Motor neuron (in vitro differentiated cells): ENCODE measurements at regions of chr5 and their contacts with region 1.

Region 1: GRCh38 chr5:79829260-79829659 is 139.6 kb downstream of the CMYA5 start:
- ATAC-seq: peak in 3 of 8 experiments; percentile 10 to 84 (median 37)
- H3K4me3 ChIP-seq: no peak overlapping the region
- H3K27ac ChIP-seq: no peak overlapping the region
- H3K4me1 ChIP-seq: peaks cover 20 to 27% of the 10 kb centered on the region in 2 donors

Region 2: DNA sequence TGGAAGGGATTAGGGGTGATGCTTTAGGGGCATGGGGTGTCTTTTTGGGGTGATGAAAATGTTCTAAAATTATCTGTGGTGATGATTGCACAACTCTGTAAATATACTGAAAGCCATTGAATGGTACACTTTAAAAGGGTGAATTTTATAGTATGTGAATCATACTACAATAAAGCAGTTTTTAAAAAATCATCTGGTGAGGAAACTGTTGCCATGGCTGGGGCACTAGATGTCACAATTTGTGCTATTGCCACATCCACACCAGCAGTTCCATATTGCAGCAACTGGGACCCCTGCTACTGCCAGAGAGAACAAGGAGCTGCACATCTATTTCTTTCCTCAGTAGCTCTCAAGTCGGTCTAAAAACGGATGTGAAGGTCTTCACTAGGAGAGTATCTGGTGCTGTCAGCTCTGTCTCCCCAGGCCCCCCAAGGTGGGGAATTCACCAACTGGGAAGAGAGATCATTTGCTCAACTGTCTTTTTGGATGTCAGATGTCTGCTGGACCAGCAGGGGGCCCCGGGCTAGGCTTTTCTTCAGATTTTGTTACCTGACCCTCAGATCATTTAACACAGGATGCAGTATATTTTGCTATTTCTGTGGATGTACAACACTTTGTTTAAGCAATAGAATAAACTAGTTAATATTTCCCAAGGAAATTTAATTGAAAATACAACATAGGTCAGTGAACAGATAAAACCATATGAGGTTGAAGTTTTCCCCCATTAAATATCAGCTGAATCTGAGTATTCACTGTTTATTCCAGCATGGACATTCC is 126.5 kb before region 1 on chr5:
- in situ Hi-C with region 1: loop called in 1 of 9 experiments (anchors 25 kb)
- ATAC-seq: peak in 2 of 8 experiments; percentile 28 to 32
- H3K4me3 ChIP-seq: no peak overlapping the region
- H3K27ac ChIP-seq: no peak overlapping the region
- H3K4me1 ChIP-seq: no peaks in the 10 kb centered on the region

Region 3: GRCh38 chr5:80442742-80443141 is 613.5 kb after region 1 on chr5:
- in situ Hi-C with region 1: no loop called
- ATAC-seq: no peak
- H3K4me3 ChIP-seq: no peak overlapping the region
- H3K27ac ChIP-seq: no peak overlapping the region
- H3K4me1 ChIP-seq: no peaks in the 10 kb centered on the region